Activated CD4-positive, alpha-beta T cell treated with anti-CD3 and anti-CD28 coated beads, Interleukin-2, amount 10 ng/mL, durations not matched to agents 24 days and 14 days (primary cell): ENCODE measurements at regions of chr16 and their contacts with region 1.

Region 1: DNA sequence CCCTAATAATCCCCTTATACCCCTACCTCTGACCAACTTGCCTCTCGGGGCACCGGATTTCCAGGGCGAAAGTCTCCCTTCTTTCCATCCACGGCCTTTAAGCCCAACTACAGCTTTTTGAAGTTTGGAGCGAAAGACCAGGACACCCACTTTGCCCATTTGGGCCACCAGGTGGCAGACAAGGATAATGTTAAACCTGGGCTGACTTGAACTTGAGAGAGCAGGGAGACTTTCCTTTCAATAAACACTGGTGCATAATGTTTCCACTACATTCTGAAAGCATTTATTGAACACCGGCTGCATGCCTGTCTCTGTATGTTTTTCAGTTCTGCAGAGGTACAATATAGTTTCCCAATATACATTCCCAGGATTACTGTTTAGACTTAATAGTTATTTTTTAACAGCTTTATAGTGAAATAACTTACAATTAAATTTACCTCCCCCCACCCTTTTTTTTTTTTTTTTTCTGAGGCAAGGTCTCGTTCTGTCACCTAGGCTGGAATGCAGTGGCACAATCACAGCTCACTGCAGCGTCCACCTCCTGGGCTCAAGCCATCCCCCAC is 6.9 kb upstream of the CES3 start:
- DNase-seq: peak; percentile 95
- H3K4me3 Mint-ChIP-seq: no peak overlapping the region
- H3K27ac Mint-ChIP-seq: no peak overlapping the region
- H3K4me1 Mint-ChIP-seq: peaks cover 24% of the 10 kb centered on the region
- H3K27me3 Mint-ChIP-seq: peaks cover 28% of the 10 kb centered on the region

Region 2: DNA sequence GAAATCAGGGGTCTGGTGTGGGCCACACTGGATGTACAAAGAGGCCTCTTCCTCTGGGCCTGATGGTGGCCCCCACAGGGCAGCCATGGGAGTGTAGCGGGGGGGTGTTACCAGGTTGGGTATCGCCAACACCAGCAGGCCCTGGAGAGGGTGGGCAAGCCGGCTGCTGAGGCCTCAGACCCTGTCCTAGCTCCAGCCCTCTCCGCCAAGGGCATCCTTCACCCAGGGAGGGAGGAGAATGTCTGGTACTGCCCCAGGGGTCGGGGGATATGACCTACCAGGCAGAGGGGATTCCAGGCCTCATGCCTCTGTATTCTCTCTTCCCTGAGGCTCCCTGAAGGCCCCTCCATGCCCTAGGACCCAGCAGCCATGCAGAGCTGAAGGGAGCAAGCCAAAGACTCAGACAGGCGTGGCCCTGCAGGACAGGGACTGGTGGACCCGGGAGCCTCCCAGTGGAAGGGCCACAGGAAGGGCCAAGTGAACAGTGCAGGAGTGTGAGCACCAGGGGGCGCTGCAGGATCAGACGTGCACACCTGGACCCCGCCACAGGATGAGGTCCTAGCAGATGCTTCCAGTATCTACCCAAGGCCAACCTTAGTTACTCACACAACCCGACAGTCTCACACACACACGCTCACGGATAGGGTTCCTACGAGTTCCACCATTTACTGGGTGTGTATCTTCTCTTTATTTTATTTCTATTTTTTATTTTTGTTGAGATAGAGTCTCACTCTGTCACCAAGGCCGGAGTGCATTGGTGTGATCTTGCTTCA is 23.3 kb after region 1 on chr16:
- intact Hi-C with region 1: loop called (anchors 2 kb)
- DNase-seq: peak; percentile 97
- H3K4me3 Mint-ChIP-seq: peak overlapping the region; percentile 22
- H3K27ac Mint-ChIP-seq: peak overlapping the region; percentile 85
- H3K4me1 Mint-ChIP-seq: peaks cover 49% of the 10 kb centered on the region
- H3K27me3 Mint-ChIP-seq: no peaks in the 10 kb centered on the region

Region 3: DNA sequence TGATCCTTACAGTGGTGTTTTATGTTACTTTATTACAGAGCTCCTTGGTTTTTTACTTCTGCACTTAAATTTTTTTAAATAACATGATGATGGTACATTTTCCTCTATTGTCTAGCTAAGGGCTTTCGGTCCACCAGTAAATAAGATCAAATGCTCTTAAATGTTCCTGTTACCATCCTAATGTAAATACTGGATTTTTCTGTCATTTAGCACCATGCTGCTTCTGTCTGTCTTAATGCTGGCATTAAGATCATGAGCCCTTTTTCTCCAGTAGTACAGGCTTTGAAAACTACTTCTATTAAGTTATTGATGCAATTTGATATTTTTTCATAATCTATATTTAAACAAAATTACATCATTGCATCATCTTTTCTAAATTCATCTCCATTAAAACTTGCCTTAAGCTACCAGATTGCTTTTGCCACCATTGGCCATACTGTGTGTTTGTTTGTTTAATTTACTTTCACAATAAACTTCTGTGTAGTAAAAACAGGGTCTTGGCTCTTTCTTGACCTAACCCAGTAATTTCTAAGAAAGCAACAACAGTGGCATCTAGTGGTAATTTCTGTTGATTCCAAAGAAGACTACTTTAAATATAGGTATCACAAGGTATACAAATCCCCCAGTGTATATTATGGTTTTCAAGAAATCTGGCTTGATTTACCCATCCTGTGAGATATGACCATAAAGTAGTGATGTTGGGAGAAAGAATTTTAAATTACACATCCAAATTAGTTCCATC is 146.6 kb after region 1 on chr16:
- intact Hi-C with region 1: loop called (anchors 1 kb)
- DNase-seq: no peak
- H3K4me3 Mint-ChIP-seq: no peak overlapping the region
- H3K27ac Mint-ChIP-seq: no peak overlapping the region
- H3K4me1 Mint-ChIP-seq: no peaks in the 10 kb centered on the region
- H3K27me3 Mint-ChIP-seq: no peaks in the 10 kb centered on the region

Region 4: GRCh38 chr16:67183627-67184328 is 229.6 kb after region 1 on chr16 and contains the start of gene MATCAP1:
- intact Hi-C with region 1: loop called (anchors 1 kb)
- DNase-seq: peak; percentile 98
- H3K4me3 Mint-ChIP-seq: no peak within 1 kb of the TSS
- H3K27ac Mint-ChIP-seq: peak within 1 kb of the TSS; percentile 45
- H3K4me1 Mint-ChIP-seq: peaks cover 19% of the 10 kb centered on the region
- H3K27me3 Mint-ChIP-seq: peaks cover 8% of the 10 kb centered on the region
- total RNA-seq, gene MATCAP1: 51.3 and 55.1 TPM in 2 replicates